Pancreas (tissue), 10 donors: ENCODE measurements at regions of chr11 and their contacts with region 1.

Region 1: DNA sequence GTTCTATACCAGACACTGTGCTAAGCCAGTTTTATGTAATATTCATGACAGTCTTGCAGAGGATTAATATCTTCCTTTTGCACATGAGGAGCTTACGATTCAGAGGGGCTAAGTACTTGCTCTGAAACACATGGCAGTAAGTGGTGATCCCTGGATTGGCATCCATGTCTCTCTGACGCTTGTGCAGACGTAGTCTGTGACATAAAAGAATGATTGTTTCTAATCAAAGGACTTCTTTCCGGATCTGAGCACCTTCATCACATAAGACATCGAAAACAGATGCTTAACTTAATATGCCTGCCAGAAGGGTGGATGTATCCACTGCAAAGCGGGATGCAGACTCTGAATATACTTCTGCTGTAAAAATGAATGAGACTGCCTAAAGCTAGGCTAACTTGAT is 74.8 kb downstream of the ARHGAP42 start:
- DNase-seq: no peak
- ATAC-seq: no peak
- H3K4me3 ChIP-seq: no peak overlapping the region
- H3K27ac ChIP-seq: no peak overlapping the region
- H3K4me1 ChIP-seq: no peaks in the 10 kb centered on the region
- H3K27me3 ChIP-seq: no peaks in the 10 kb centered on the region
- CTCF ChIP-seq: no peak

Region 2: DNA sequence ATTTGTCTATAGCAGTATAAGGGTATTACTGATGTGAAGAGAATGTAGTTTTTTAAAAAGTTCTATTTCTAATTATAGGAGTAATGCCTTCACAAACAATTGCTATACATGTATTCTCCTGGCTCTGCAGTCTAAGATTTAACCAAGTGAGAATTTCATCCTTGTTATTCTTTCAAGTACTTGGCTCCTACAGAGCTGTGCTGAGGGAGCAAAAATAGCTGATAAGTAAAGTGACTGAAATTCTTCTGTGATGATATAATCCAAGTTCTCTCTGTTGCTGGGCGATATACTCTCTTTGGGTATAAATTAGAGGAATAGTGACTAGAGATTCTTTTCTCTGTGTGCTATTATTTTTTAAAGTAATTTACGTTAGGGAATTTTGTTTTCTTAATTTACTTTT is 299.8 kb after region 1 on chr11:
- intact Hi-C with region 1: no loop called
- DNase-seq: no peak
- ATAC-seq: no peak
- H3K4me3 ChIP-seq: no peak overlapping the region
- H3K27ac ChIP-seq: no peak overlapping the region
- H3K4me1 ChIP-seq: no peaks in the 10 kb centered on the region
- H3K27me3 ChIP-seq: no peaks in the 10 kb centered on the region
- CTCF ChIP-seq: no peak

Region 3: DNA sequence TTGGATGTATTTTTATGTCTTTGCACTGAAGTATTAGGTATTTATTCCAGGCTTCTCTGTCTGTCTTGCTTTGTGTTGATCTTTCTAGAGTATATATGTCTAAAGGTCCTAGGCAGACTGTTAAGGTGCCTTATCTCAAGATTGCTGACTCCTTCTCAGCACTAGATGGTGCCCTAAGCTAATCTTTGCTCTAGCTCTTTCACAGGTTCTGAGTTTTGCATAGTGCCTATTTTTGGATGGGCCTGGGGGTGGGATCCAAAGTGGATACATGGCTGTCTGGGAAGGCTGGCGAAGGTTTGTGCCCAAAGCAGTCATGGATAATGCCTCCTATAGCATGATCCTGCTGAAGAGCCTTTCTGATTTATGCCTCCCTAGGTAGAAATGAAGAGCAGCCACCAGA is 667.1 kb after region 1 on chr11:
- intact Hi-C with region 1: loop called in 1 of 3 experiments (anchors 5 kb)
- DNase-seq: no peak
- ATAC-seq: peak; percentile 71 to 77 (median 76)
- H3K4me3 ChIP-seq: no peak overlapping the region
- H3K27ac ChIP-seq: no peak overlapping the region
- H3K4me1 ChIP-seq: no peaks in the 10 kb centered on the region
- H3K27me3 ChIP-seq: no peaks in the 10 kb centered on the region
- CTCF ChIP-seq: peak in 1 of 4 donors; percentile 16